ENCODE measurements at regions of chrX and their contacts with region 1.

Region 1: GRCh38 chrX:22246620-22247019 is 26.1 kb upstream of the CBLL2 start:
- DNase-seq: no peak
- H3K4me3 ChIP-seq: no peak overlapping the region
- CTCF ChIP-seq: no peak

Region 2: DNA sequence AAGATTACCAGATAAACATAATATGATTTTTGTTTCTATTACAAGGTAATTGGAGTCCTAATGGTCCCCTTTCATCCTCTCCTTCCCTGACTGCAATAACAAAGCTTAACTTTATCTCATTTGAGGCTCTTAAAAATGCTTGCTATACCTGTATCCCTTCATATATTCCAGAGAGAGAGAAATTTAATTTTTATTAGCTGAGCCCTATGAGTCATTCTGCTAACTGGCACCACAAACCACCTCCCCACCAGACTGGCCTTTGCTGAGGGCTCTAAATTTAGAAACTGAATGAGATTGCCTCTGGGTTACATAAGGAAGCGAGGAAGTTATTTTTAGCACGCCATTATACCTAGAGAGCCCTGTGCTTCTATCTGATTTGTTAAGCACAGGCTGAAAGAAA is 53.5 kb after region 1 on chrX:
- in situ Hi-C with region 1: loop called (anchors 5 kb)
- DNase-seq: peak; percentile 33
- H3K4me3 ChIP-seq: no peak overlapping the region
- CTCF ChIP-seq: no peak

Region 3: DNA sequence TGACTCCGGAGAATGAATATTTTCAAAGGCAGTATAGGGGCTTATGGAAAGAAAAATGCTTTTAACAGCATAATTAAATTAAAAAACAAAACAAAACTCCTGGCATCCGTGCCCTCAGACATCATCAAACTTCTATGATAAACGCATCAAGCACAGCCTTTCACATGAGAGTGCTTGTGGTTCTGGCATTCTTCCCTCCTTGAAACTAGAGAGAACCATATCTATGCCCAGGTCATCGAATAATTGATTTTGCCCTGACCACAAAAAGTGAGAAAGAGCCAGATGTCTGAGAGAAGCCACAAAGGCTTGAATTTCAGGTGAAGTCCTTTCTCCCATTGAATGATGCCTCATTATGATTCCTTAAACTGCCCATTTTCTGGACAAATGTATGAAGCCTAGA is 312.9 kb after region 1 on chrX:
- in situ Hi-C with region 1: no loop called
- DNase-seq: peak; percentile 47
- H3K4me3 ChIP-seq: no peak overlapping the region
- CTCF ChIP-seq: no peak

Measured in astrocyte of the cerebellum (primary cell).